Endothelial cell of umbilical vein (primary cell): ENCODE measurements at regions of chr1 and their contacts with region 1.

Region 1: GRCh38 chr1:101238681-101239094 is 1.9 kb downstream of the S1PR1 start:
- DNase-seq: peak; percentile 94
- H3K4me3 ChIP-seq: peak overlapping the region; percentile 81 to 100 (median 88)
- H3K27ac ChIP-seq: peak overlapping the region; percentile 99
- H3K4me1 ChIP-seq: peaks cover 55% of the 10 kb centered on the region
- H3K27me3 ChIP-seq: no peaks in the 10 kb centered on the region
- CTCF ChIP-seq: peak; percentile 97 to 98
- POLR2A ChIP-seq: peak; percentile 46

Region 2: DNA sequence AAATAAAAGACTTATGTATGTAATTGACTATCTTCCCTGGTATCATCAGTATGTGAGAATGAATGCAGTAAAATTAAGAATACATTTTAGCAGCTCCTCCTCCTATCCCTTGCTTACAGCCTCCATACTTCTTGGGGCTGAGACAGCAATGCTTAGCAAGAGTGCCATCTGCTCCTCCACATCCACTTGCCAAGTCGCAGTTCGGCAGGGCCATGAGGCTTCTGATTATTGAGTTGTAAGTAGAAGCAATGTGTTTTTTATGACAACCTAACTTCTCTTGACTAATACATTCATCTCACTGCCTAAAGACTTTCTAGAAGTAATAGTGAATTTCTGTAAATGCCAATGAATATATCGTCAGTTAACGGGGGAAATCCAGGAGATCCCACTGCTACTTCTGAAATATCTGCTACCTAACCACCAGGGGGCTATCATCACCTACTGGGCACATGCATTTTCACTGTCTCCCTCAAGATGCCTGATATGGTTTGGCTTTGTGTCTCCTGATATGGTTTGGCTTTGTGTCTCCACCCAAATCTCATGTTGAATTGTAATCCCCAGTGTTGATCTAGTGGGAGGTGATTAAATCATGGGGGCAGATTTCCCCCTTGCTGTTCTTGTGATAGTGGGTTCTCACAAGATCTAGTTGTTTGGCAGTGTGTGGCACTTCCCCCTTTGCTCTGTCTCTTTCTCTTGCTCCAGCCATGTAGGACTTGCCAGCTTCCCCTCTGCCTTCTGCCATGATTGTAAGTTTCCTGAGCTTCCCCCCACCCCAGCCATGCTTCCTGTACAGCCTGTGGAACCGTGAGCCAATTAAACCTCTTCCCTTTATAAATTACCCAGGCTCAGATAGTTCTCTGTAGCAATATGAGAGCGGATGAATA is 403.7 kb before region 1 on chr1:
- CTCF ChIA-PET with region 1: no interaction called
- POLR2A ChIA-PET with region 1: no interaction called
- dilution Hi-C with region 1: no loop called
- intact Hi-C with region 1: no loop called
- DNase-seq: peak; percentile 26
- H3K4me3 ChIP-seq: no peak overlapping the region
- H3K27ac ChIP-seq: peak overlapping the region; percentile 95
- H3K4me1 ChIP-seq: peaks cover 22% of the 10 kb centered on the region
- H3K27me3 ChIP-seq: no peaks in the 10 kb centered on the region
- CTCF ChIP-seq: peak in 1 of 2 donors; percentile 13
- POLR2A ChIP-seq: no peak

Region 3: GRCh38 chr1:100921109-100921706 is 317.5 kb before region 1 on chr1:
- CTCF ChIA-PET with region 1: interaction called, 19 read pairs
- POLR2A ChIA-PET with region 1: interaction called, 5 read pairs
- dilution Hi-C with region 1: no loop called
- intact Hi-C with region 1: loop called (anchors 1 kb)
- DNase-seq: peak; percentile 81
- H3K4me3 ChIP-seq: no peak overlapping the region
- H3K27ac ChIP-seq: no peak overlapping the region
- H3K4me1 ChIP-seq: peaks cover 11% of the 10 kb centered on the region
- H3K27me3 ChIP-seq: no peaks in the 10 kb centered on the region
- CTCF ChIP-seq: peak; percentile 24
- POLR2A ChIP-seq: no peak

Region 4: GRCh38 chr1:101112051-101112780 is 126.5 kb before region 1 on chr1:
- CTCF ChIA-PET with region 1: no interaction called
- POLR2A ChIA-PET with region 1: no interaction called
- dilution Hi-C with region 1: no loop called
- intact Hi-C with region 1: loop called (anchors 1 kb)
- DNase-seq: peak; percentile 93
- H3K4me3 ChIP-seq: no peak overlapping the region
- H3K27ac ChIP-seq: peak overlapping the region; percentile 78
- H3K4me1 ChIP-seq: peaks cover 12% of the 10 kb centered on the region
- H3K27me3 ChIP-seq: no peaks in the 10 kb centered on the region
- CTCF ChIP-seq: no peak
- POLR2A ChIP-seq: no peak

Region 5: DNA sequence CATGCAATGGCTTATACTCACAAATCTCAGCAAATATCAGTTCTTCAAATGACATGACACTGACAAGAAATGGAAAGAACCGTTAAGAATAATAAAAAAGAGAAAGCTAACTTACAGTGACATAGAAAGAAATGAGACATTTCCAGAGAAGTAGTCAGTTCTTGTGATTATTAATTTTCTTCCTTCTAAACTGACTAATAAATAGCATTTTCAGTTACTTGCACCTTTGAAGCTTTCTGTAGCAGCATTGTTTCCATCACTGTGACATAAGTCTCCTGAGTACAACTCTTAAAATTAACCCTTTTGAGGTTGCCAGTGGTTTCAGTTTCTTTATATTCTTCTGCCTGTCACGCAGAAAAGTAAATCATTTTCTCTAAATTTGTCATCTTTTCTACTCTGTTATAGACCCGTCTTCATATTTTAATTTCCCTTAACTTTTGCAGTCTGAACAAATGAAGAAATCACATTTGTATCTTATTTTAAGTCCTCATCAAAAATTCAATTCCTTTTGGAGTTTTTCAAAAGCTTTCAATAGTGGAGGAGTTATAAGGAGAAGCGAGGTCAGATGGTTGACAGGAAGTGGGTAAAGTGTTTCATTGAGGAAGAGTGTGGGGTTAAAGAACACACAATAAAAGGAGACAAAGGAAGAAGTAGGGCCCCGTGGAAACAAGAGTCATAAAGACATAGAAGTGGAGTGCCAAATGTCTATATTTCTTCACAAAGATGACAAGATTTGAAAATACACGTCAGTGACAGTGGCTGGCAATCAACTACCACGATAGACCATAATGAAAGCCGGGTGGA is 59.8 kb before region 1 on chr1:
- CTCF ChIA-PET with region 1: interaction called, 12 read pairs
- POLR2A ChIA-PET with region 1: interaction called, 5 read pairs
- dilution Hi-C with region 1: no loop called
- intact Hi-C with region 1: loop called (anchors 1 kb)
- DNase-seq: no peak
- H3K4me3 ChIP-seq: no peak overlapping the region
- H3K27ac ChIP-seq: peak overlapping the region; percentile 9
- H3K4me1 ChIP-seq: peaks cover 62% of the 10 kb centered on the region
- H3K27me3 ChIP-seq: no peaks in the 10 kb centered on the region
- CTCF ChIP-seq: no peak
- POLR2A ChIP-seq: no peak

Region 6: DNA sequence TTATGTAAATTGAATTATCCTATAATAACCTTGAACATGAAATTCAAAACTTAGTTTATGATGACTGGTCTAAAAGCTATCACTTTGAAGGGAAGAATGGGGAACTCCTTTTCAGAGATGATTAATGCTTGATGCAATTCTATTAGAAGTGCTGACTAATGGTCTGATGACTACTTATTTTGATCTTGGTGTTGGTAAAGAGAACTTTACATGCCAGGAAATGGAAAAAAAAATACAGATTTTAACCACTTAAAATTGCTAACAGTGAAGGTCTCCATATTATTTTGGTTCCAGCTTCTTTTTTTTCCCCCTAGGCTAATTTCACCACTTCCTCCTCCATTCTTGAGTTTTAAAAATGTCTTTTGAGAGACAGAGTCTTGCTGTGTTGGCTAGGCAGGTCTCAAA is 21.1 kb after region 1 on chr1:
- CTCF ChIA-PET with region 1: interaction called, 4 read pairs
- POLR2A ChIA-PET with region 1: interaction called, 3 read pairs
- dilution Hi-C with region 1: no loop called
- intact Hi-C with region 1: loop called (anchors 1 kb)
- DNase-seq: peak; percentile 83
- H3K4me3 ChIP-seq: no peak overlapping the region
- H3K27ac ChIP-seq: peak overlapping the region; percentile 85
- H3K4me1 ChIP-seq: peaks cover 53% of the 10 kb centered on the region
- H3K27me3 ChIP-seq: no peaks in the 10 kb centered on the region
- CTCF ChIP-seq: no peak
- POLR2A ChIP-seq: no peak

Region 7: GRCh38 chr1:101357444-101357986 is 118.8 kb after region 1 on chr1:
- CTCF ChIA-PET with region 1: interaction called, 20 read pairs
- POLR2A ChIA-PET with region 1: no interaction called
- dilution Hi-C with region 1: no loop called
- intact Hi-C with region 1: loop called (anchors 1 kb)
- DNase-seq: peak; percentile 88
- H3K4me3 ChIP-seq: no peak overlapping the region
- H3K27ac ChIP-seq: no peak overlapping the region
- H3K4me1 ChIP-seq: no peaks in the 10 kb centered on the region
- H3K27me3 ChIP-seq: no peaks in the 10 kb centered on the region
- CTCF ChIP-seq: peak; percentile 73 to 88
- POLR2A ChIP-seq: no peak